B cell (primary cell): ENCODE measurements at regions of chr12 and their contacts with region 1.

Region 1: GRCh38 chr12:51025836-51026638 is at the start of gene SLC11A2:
- DNase-seq: peak; percentile 92
- ATAC-seq: peak; percentile 98
- H3K4me3 ChIP-seq: peak within 1 kb of the TSS; percentile 34 to 97 (median 78)
- H3K4me3 Mint-ChIP-seq: peak within 1 kb of the TSS; percentile 94
- H3K27ac ChIP-seq: peak within 1 kb of the TSS; percentile 71 to 74
- H3K27ac Mint-ChIP-seq: peak within 1 kb of the TSS; percentile 93
- H3K4me1 ChIP-seq: peaks cover 13 to 28% of the 10 kb centered on the region in 2 donors
- H3K4me1 Mint-ChIP-seq: peaks cover 36% of the 10 kb centered on the region
- H3K27me3 ChIP-seq: peaks cover 0 to 3% (median 0%) of the 10 kb centered on the region in 4 experiments
- H3K27me3 Mint-ChIP-seq: peaks cover 4% of the 10 kb centered on the region
- CTCF ChIP-seq: no peak
- total RNA-seq, gene SLC11A2: 42.0 and 45.7 TPM in 2 replicates

Region 2: GRCh38 chr12:50786498-50787231 is 239.4 kb before region 1 on chr12:
- CTCF ChIA-PET with region 1: no interaction called
- POLR2A ChIA-PET with region 1: no interaction called
- intact Hi-C with region 1: no loop called
- DNase-seq: no peak
- ATAC-seq: no peak
- H3K4me3 ChIP-seq: no peak overlapping the region
- H3K4me3 Mint-ChIP-seq: no peak overlapping the region
- H3K27ac ChIP-seq: no peak overlapping the region
- H3K27ac Mint-ChIP-seq: peak overlapping the region; percentile 2
- H3K4me1 ChIP-seq: no peaks in the 10 kb centered on the region
- H3K4me1 Mint-ChIP-seq: peaks cover 13% of the 10 kb centered on the region
- H3K27me3 ChIP-seq: no peaks in the 10 kb centered on the region
- H3K27me3 Mint-ChIP-seq: no peaks in the 10 kb centered on the region
- CTCF ChIP-seq: no peak

Region 3: DNA sequence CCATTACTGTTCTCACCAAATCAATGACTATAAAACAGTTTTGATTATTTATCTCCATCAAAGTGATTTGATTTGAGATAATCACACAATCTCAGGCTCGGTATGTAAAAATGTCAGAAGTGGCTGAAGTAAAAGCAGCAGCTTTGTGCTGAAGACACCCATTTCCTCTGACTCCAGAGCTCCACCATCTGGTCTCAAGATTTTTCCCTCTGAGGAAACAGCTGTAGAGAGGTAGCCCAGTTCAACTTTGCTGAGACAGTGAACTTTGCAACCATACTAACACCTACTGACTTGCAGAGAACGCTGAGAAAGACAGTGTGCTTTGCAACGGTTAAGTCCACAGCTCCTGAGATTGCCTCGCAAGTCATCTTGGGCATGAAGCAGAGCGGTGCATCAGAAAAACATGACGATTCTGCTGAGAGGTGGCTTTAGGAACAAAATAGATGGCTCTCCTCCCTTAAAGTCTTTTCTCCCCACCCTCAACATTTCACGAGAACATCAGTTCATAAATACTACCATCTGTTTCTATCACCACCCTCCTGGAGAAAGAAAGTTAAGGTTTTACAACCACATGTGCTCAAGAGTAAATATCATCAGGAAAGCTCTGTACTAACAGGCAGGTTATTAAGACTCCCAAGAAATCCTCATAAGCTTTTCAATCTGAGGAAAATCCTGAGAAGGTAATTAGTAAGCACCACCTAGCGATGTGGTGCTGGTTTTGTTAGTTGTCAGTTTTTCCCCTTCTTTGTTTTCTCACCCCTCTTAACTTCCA is 38.9 kb before region 1 on chr12:
- CTCF ChIA-PET with region 1: interaction called, 20 read pairs
- POLR2A ChIA-PET with region 1: no interaction called
- intact Hi-C with region 1: no loop called
- DNase-seq: peak; percentile 65
- ATAC-seq: peak; percentile 80
- H3K4me3 ChIP-seq: no peak overlapping the region
- H3K4me3 Mint-ChIP-seq: no peak overlapping the region
- H3K27ac ChIP-seq: no peak overlapping the region
- H3K27ac Mint-ChIP-seq: no peak overlapping the region
- H3K4me1 ChIP-seq: peaks cover 0 to 2% of the 10 kb centered on the region in 2 donors
- H3K4me1 Mint-ChIP-seq: peaks cover 6% of the 10 kb centered on the region
- H3K27me3 ChIP-seq: no peaks in the 10 kb centered on the region
- H3K27me3 Mint-ChIP-seq: no peaks in the 10 kb centered on the region
- CTCF ChIP-seq: peak; percentile 40

Region 4: DNA sequence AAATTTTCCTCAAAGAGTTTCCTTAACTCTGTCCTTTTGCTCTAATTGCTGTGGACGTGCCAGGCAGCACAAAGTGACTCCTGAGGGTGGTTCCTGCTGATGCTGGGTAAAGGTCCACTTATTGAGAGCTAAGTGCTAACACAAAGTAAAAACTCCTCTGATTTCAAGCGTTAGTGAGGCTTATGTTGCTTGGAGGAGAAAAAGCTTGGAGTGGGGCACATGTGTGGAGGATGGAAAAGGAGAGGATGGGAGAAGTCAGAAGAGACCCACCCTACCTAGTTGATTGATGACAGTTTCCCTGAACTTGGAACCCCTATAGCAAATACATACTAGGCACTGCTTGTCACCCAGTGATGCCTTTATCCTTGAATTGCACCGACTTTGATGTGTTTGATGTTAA is 10.2 kb after region 1 on chr12:
- CTCF ChIA-PET with region 1: no interaction called
- POLR2A ChIA-PET with region 1: no interaction called
- intact Hi-C with region 1: no loop called
- DNase-seq: no peak
- ATAC-seq: no peak
- H3K4me3 ChIP-seq: no peak overlapping the region
- H3K4me3 Mint-ChIP-seq: no peak overlapping the region
- H3K27ac ChIP-seq: no peak overlapping the region
- H3K27ac Mint-ChIP-seq: no peak overlapping the region
- H3K4me1 ChIP-seq: no peaks in the 10 kb centered on the region
- H3K4me1 Mint-ChIP-seq: no peaks in the 10 kb centered on the region
- H3K27me3 ChIP-seq: no peaks in the 10 kb centered on the region
- H3K27me3 Mint-ChIP-seq: no peaks in the 10 kb centered on the region
- CTCF ChIP-seq: no peak

Region 5: GRCh38 chr12:51083126-51083833 is 57.2 kb after region 1 on chr12 and contains the start of gene CSRNP2:
- CTCF ChIA-PET with region 1: no interaction called
- POLR2A ChIA-PET with region 1: interaction called, 5 read pairs
- intact Hi-C with region 1: loop called (anchors 1 kb)
- DNase-seq: peak; percentile 96
- ATAC-seq: peak; percentile 99
- H3K4me3 ChIP-seq: peak within 1 kb of the TSS; percentile 54 to 87 (median 77)
- H3K4me3 Mint-ChIP-seq: peak within 1 kb of the TSS; percentile 96
- H3K27ac ChIP-seq: peak within 1 kb of the TSS; percentile 11 to 88
- H3K27ac Mint-ChIP-seq: peak within 1 kb of the TSS; percentile 88
- H3K4me1 ChIP-seq: peaks cover 9 to 17% of the 10 kb centered on the region in 2 donors
- H3K4me1 Mint-ChIP-seq: peaks cover 25% of the 10 kb centered on the region
- H3K27me3 ChIP-seq: no peaks in the 10 kb centered on the region
- H3K27me3 Mint-ChIP-seq: no peaks in the 10 kb centered on the region
- CTCF ChIP-seq: peak; percentile 20
- total RNA-seq, gene CSRNP2: 49.8 and 52.3 TPM in 2 replicates

Region 6: DNA sequence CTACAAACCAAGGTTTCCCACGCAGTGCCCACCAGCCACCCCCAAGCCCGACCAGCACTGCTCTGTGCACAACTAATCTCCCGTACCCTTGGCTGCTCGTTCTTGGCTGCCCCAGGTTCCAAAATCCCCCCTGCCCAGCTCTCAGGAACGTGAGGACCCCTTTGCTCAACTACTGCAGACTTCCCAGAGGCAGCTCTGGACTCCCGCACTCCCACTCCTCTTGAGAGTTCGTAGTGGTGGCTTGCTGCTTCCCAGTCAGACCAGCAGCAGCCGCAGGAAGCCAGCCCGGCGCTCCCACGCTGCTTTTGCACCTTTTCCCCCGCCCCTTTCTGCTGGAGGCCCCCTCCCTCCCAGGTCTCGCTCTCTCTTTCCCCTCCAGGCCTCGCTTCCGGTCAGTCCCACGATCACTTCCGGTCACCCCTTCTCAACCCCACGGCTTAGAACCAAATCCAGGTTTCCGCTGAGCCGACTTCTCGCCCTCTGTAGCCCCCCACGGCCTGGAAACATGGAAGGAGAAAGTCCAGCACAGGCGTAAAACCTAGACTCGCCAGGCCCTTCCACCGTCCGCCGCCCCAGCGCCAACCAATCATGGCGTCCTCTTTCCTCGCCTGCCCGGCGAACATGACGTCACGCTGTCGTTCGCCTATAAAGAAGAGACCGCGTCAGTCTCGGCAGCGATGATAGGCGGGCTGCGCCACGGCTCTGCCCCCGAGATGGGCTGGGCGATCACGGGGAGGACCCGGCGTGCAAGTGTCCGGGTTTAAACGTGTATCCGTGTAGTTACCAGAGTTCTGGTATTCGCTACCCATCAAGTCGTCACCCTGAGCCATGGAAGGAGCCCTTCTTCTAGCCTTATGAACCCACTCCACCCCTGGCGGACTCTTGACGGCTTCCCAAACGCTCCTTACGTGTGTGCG is 146.7 kb after region 1 on chr12 and contains the start of gene TFCP2:
- CTCF ChIA-PET with region 1: no interaction called
- POLR2A ChIA-PET with region 1: no interaction called
- intact Hi-C with region 1: loop called (anchors 1 kb)
- DNase-seq: peak; percentile 97
- ATAC-seq: peak; percentile 99
- H3K4me3 ChIP-seq: peak within 1 kb of the TSS; percentile 75 to 100 (median 88)
- H3K4me3 Mint-ChIP-seq: peak within 1 kb of the TSS; percentile 83
- H3K27ac ChIP-seq: peak within 1 kb of the TSS; percentile 85 to 96
- H3K27ac Mint-ChIP-seq: peak within 1 kb of the TSS; percentile 77
- H3K4me1 ChIP-seq: peaks cover 16 to 19% of the 10 kb centered on the region in 2 donors
- H3K4me1 Mint-ChIP-seq: peaks cover 15% of the 10 kb centered on the region
- H3K27me3 ChIP-seq: no peaks in the 10 kb centered on the region
- H3K27me3 Mint-ChIP-seq: no peaks in the 10 kb centered on the region
- CTCF ChIP-seq: no peak
- total RNA-seq, gene TFCP2: 37.0 and 38.8 TPM in 2 replicates